GM12878 (cell line): ENCODE measurements at regions of chr2 and their contacts with region 1.

Region 1: GRCh38 chr2:62306751-62307468 is 111.0 kb downstream of the B3GNT2 start:
- DNase-seq: peak; percentile 95
- ATAC-seq: peak; percentile 65
- H3K4me3 ChIP-seq: peak overlapping the region; percentile 38; the same call in 1 of the 2 replicates
- H3K27ac ChIP-seq: peak overlapping the region; percentile 99
- H3K4me1 ChIP-seq: peaks cover 92% of the 10 kb centered on the region
- H3K27me3 ChIP-seq: no peaks in the 10 kb centered on the region
- CTCF ChIP-seq: no peak
- EP300 ChIP-seq: peak; percentile 38 to 45; a peak in 2 of 4 replicates
- POLR2A ChIP-seq: peak; percentile 45; the same call in 1 of the 2 replicates
- RAD21 ChIP-seq: no peak

Region 2: GRCh38 chr2:62140426-62141141 is 166.3 kb before region 1 on chr2:
- CTCF ChIA-PET with region 1: interaction called, 8 read pairs
- POLR2A ChIA-PET with region 1: interaction called, 14 read pairs
- RAD21 ChIA-PET with region 1: interaction called, 14 read pairs
- SMC1A ChIA-PET with region 1: interaction called, 24 read pairs
- in situ Hi-C with region 1: loop called (anchors 5 kb)
- intact Hi-C with region 1: loop called (anchors 5 kb)
- DNase-seq: peak; percentile 85
- ATAC-seq: peak; percentile 68
- H3K4me3 ChIP-seq: no peak overlapping the region
- H3K27ac ChIP-seq: peak overlapping the region; percentile 90
- H3K4me1 ChIP-seq: peaks cover 62% of the 10 kb centered on the region
- H3K27me3 ChIP-seq: no peaks in the 10 kb centered on the region
- CTCF ChIP-seq: no peak
- EP300 ChIP-seq: peak in 1 of 2 experiments; percentile 45; a peak in 1 of 4 replicates
- POLR2A ChIP-seq: no peak
- RAD21 ChIP-seq: peak; percentile 29; the same call in 1 of the 2 replicates

Region 3: GRCh38 chr2:62202019-62202722 is 104.7 kb before region 1 on chr2:
- CTCF ChIA-PET with region 1: interaction called, 15 read pairs
- POLR2A ChIA-PET with region 1: interaction called, 49 read pairs
- RAD21 ChIA-PET with region 1: interaction called, 114 read pairs
- SMC1A ChIA-PET with region 1: interaction called, 47 read pairs
- in situ Hi-C with region 1: no loop called
- intact Hi-C with region 1: loop called (anchors 2 kb)
- DNase-seq: no peak
- ATAC-seq: peak; percentile 62
- H3K4me3 ChIP-seq: peak overlapping the region; percentile 86
- H3K27ac ChIP-seq: peak overlapping the region; percentile 89
- H3K4me1 ChIP-seq: peaks cover 26% of the 10 kb centered on the region
- H3K27me3 ChIP-seq: no peaks in the 10 kb centered on the region
- CTCF ChIP-seq: no peak
- EP300 ChIP-seq: 0 out of 4 replicates have a peak, but pooled peaks of 1 of the 2 experiments have one; percentile 31
- POLR2A ChIP-seq: peak; percentile 65
- RAD21 ChIP-seq: no peak

Region 4: DNA sequence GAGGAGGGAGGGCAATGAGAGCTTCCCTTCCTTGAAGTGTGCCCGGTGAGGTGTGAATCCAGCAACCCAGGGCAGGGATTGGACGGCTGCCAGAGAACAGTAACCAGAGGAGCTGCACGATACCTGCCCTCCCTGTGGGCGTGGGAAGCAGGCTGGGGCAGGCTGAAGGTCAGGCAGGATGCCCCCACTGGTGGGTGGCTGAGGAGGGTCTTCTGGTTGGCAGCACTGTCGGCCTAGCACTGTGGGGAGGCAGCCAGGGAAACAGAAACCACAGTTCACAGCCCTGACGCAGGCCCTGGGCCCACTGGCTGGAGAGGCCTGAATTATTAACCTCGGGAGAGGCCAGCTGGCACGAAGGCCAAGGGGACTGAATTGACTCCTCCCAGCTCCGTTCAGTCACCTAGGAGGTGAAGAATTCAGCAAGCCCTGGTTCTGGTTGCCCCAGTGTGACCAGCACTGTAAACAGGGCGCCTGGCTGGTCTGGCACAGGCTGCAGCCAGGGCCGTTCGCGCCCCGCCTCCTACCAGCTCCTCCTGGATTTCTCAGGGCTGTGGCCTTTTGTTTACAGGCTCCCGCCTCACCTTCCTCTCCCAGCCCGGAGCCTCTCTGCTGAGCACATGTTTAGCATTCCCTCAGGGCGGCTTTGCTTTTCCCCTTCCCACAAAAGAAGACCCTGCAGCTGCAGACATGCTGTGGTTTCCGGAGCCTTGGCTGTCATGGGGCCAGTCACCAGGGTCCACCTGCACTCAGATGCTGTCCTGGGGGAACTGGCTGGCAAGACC is 13.2 kb before region 1 on chr2:
- CTCF ChIA-PET with region 1: interaction called, 12 read pairs
- POLR2A ChIA-PET with region 1: interaction called, 25 read pairs
- RAD21 ChIA-PET with region 1: interaction called, 21 read pairs
- SMC1A ChIA-PET with region 1: interaction called, 52 read pairs
- in situ Hi-C with region 1: no loop called
- intact Hi-C with region 1: no loop called
- DNase-seq: no peak
- ATAC-seq: peak; percentile 85
- H3K4me3 ChIP-seq: no peak overlapping the region
- H3K27ac ChIP-seq: peak overlapping the region; percentile 72
- H3K4me1 ChIP-seq: peaks cover 33% of the 10 kb centered on the region
- H3K27me3 ChIP-seq: no peaks in the 10 kb centered on the region
- CTCF ChIP-seq: no peak
- EP300 ChIP-seq: peak in 1 of 2 experiments; percentile 7; a peak in 1 of 4 replicates
- POLR2A ChIP-seq: no peak
- RAD21 ChIP-seq: no peak

Region 5: GRCh38 chr2:62340994-62341484 is 34.1 kb after region 1 on chr2:
- CTCF ChIA-PET with region 1: interaction called, 17 read pairs
- POLR2A ChIA-PET with region 1: interaction called, 5 read pairs
- RAD21 ChIA-PET with region 1: interaction called, 126 read pairs
- SMC1A ChIA-PET with region 1: interaction called, 467 read pairs
- in situ Hi-C with region 1: no loop called
- intact Hi-C with region 1: loop called (anchors 2 kb)
- DNase-seq: peak; percentile 85
- ATAC-seq: peak; percentile 84
- H3K4me3 ChIP-seq: no peak overlapping the region
- H3K27ac ChIP-seq: peak overlapping the region; percentile 77
- H3K4me1 ChIP-seq: peaks cover 50% of the 10 kb centered on the region
- H3K27me3 ChIP-seq: no peaks in the 10 kb centered on the region
- CTCF ChIP-seq: no peak
- EP300 ChIP-seq: peak; percentile 15 to 43; a peak in 2 of 4 replicates
- POLR2A ChIP-seq: no peak; the same call in 1 of the 2 replicates
- RAD21 ChIP-seq: 0 out of 2 replicates have a peak, but pooled peaks have one; percentile 14

Region 6: GRCh38 chr2:62577994-62578781 is 271.3 kb after region 1 on chr2:
- CTCF ChIA-PET with region 1: no interaction called
- POLR2A ChIA-PET with region 1: no interaction called
- RAD21 ChIA-PET with region 1: no interaction called
- SMC1A ChIA-PET with region 1: no interaction called
- in situ Hi-C with region 1: no loop called
- intact Hi-C with region 1: no loop called
- DNase-seq: no peak
- ATAC-seq: no peak
- H3K4me3 ChIP-seq: no peak overlapping the region
- H3K27ac ChIP-seq: no peak overlapping the region
- H3K4me1 ChIP-seq: no peaks in the 10 kb centered on the region
- H3K27me3 ChIP-seq: no peaks in the 10 kb centered on the region
- CTCF ChIP-seq: no peak
- EP300 ChIP-seq: no peak
- POLR2A ChIP-seq: no peak
- RAD21 ChIP-seq: no peak